HAP-1 (cell line): ENCODE measurements at regions of chr2 and their contacts with region 1.

Region 1: GRCh38 chr2:101022221-101022620 is 20.1 kb downstream of the RPL31 start:
- DNase-seq: no peak
- H3K4me3 ChIP-seq: no peak overlapping the region
- H3K4me1 ChIP-seq: peaks cover 4% of the 10 kb centered on the region
- H3K27me3 ChIP-seq: no peaks in the 10 kb centered on the region

Region 2: DNA sequence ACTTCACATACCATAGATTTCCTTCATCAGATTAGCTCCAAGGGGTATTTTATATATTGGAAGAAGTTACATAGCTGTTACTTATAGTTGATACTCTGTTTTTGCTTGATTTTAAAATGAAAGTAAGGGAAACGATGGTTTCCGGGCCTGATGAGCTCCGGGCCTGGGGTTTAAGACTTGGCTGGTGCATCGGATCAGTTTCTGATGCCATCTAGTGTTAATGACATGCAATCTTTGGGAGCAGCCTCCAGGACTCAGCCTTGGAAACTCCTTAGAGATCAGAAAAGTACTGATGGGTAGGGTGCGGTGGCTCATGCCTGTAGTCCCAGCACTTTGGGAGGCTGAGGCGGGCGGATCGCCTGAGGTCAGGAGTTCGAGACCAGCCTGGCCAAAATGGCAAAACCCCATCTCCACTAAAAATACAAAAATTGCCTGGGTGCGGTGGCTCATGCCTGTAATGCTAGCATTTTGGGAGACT is 183.3 kb after region 1 on chr2:
- in situ Hi-C with region 1: loop called (anchors 5 kb)
- DNase-seq: peak; percentile 75 to 76
- H3K4me3 ChIP-seq: no peak overlapping the region
- H3K4me1 ChIP-seq: no peaks in the 10 kb centered on the region
- H3K27me3 ChIP-seq: no peaks in the 10 kb centered on the region